Activated T-helper 1 cell treated with anti-CD3 and anti-CD28 coated beads, Interleukin-12 subunit alpha, Interleukin-12 subunit beta, Interleukin-2, Interleukin-4 antibody, amounts not matched to agents 30 ng/mL and 10 ng/mL and 1 ng/mL, durations not matched to agents 14 hours and 24 hours and 36 hours (primary cell): ENCODE measurements at regions of chr4 and their contacts with region 1.

Region 1: GRCh38 chr4:1721004-1721665 is at the starts of genes TACC3 and TMEM129:
- DNase-seq: peak; percentile 90
- H3K4me3 Mint-ChIP-seq: peak within 1 kb of the TSS; percentile 94
- H3K27ac Mint-ChIP-seq: peak within 1 kb of the TSS; percentile 97
- H3K4me1 Mint-ChIP-seq: peaks cover 45% of the 10 kb centered on the region
- H3K27me3 Mint-ChIP-seq: no peaks in the 10 kb centered on the region
- total RNA-seq, gene TACC3: 134 and 139 TPM in 2 replicates
- total RNA-seq, gene TMEM129: 27.4 and 28.4 TPM in 2 replicates

Region 2: DNA sequence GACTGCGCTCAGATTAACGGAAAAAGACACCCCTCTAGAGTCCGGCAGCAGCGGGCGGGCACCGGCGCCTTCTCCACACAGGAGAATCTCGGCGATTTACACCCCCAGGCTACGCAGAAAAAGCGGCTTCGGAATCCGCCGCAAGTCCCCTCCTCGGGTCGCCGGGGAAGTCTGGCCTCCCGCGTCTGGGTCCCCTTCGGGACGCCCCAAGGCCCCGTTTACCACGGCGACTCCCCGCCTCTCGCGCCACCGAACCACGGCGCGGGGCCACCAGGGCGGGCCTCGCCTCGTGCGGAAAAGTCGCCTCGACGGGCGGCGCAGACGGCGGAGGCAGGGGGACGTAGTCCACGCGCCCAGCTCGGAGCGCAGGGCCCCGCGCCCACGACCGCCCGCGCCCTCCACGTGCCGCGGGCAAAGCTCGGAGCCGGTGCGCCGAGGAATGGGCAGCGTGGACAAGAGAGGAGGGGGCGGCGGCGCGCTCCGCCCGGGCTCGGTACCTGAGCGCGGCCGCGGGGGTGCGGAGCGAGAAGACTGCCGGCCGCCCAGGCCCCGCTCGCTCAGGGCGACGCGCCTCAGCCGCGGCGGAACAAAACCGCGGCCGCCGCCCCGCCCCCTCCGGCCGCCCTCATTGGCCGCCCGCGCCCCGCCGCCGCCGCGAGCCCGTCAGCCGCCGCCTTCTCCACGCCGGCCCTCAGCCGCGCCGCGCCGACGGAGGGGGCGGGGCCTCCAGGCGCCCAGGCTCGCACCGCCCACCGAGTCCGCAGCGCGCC is 37.2 kb before region 1 on chr4 and contains the start of gene FAM53A:
- intact Hi-C with region 1: loop called (anchors 1 kb)
- DNase-seq: peak; percentile 93
- H3K4me3 Mint-ChIP-seq: peak within 1 kb of the TSS; percentile 87
- H3K27ac Mint-ChIP-seq: peak within 1 kb of the TSS; percentile 90
- H3K4me1 Mint-ChIP-seq: peaks cover 12% of the 10 kb centered on the region
- H3K27me3 Mint-ChIP-seq: peaks cover 2% of the 10 kb centered on the region
- total RNA-seq, gene FAM53A: 2.5 and 5.5 TPM in 2 replicates

Region 3: DNA sequence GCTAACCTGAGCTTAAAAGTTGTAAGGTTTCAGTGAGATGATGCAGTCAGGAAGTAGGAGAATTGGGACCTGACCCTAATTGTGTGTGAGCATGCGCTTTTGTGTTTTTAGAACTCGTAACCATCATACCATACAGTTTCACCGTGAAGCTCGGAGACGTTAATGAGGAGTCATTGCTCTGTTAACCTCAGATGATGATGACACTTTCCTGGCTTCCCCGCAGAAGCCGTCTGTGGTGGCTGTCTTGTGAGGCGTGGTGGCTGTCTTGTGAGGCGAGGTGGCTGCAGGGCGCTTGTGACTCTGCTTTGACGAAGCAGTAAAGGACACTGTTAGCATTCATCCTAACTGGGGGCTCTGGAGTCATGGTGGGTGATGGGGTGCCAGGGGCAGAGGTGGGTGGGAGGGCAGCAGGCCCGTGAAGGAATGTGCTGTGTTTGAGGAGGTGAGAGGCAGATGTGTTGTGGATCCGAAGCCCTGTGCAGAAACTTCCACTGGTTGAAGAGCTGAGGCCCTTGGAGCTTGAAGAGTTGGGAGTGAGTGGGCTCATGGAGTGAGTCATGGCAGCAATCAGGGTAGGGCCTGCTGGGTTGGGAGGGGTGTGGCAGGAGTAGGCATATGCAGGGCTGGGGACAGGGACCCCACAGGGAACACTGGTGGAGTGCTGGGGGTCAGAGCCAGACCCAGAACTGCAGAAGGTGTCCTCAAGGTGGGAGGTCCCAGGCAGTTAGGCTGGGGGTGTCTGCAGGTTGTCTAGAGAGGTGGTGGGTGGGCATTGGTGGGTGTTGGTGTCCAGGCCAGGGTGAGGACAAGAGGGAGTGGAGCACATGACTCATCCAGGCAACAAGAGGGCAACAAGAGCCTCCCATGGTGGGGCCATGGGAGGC is 207.5 kb after region 1 on chr4:
- intact Hi-C with region 1: no loop called
- DNase-seq: no peak
- H3K4me3 Mint-ChIP-seq: no peak overlapping the region
- H3K27ac Mint-ChIP-seq: peak overlapping the region; percentile 18
- H3K4me1 Mint-ChIP-seq: no peaks in the 10 kb centered on the region
- H3K27me3 Mint-ChIP-seq: no peaks in the 10 kb centered on the region